Natural killer cell (primary cell): ENCODE measurements at regions of chr15 and their contacts with region 1.

Region 1: DNA sequence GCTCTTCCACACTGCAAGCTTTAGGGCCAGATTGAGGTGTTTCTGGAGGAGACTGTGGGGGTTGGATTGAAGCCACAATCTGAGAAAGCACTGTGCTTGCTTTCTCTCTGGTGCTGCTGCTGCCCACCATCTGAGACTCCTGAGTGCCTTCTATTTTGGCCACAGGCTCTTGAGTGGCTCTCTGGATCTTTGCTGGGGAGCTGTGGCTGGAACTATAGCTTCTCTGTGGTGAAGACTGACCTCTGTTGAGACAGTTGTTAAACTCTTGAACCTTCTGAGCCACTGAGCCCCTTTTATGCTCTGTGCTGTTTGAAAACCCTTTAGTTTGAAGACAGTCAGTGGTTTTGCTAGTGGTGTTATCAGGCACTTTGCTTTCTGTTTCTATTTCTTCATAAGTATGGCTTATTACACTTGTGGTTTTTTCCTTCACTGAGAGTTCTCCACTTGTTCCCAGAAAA is 108.7 kb upstream of the TSPAN3 start:
- DNase-seq: peak; percentile 26 to 50
- ATAC-seq: peak; percentile 59 to 74 (median 73)
- H3K4me3 ChIP-seq: no peak overlapping the region
- H3K4me3 Mint-ChIP-seq: peak overlapping the region; percentile 79
- H3K27ac ChIP-seq: peak overlapping the region; percentile 75
- H3K27ac Mint-ChIP-seq: peak overlapping the region; percentile 86 to 89
- H3K4me1 ChIP-seq: peaks cover 41% of the 10 kb centered on the region
- H3K4me1 Mint-ChIP-seq: peaks cover 48 to 51% of the 10 kb centered on the region in 2 donors
- H3K27me3 ChIP-seq: no peaks in the 10 kb centered on the region
- H3K27me3 Mint-ChIP-seq: no peaks in the 10 kb centered on the region
- CTCF ChIP-seq: no peak

Region 2: DNA sequence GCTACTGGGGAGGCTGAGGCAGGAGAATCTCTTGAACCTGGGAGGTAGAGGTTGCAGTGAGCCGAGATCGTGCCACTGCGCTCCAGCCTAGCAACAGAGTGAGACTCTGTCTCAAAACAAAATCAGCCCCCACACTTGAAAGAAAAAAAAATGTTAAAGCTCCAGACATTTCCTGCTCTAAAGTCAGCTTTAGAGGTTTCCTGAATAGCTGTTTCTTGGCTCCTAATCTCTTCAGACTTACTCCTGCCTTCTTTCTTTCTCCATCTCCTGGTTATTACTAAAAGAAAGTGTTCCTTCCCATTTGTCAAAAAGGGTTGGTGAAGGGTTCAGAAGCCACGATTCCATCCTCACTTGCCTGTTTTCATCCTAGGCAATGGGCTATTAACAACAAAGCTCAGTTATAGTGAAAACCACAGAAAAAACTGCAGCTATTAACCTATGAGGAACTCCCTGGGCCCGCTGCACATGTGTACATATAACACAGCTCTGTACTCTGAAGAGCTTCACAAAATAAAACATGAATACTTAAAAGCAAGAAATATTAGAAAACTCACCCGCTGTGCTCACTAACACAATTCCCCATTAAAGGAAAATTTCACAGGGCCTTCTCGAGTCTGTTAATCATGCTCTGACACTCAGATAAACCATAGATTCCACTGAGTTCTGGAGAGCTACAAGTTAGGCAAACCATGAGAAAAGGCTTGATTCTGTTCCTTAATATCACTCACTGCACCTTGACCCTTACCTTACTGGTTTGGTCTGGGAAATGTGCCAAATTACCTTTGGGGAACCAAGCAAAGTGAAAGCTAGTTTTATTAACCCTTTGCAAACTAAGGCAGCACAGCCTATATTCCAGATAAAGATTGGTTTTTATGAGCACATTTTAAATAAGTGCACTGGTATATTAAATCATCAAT is 18.8 kb before region 1 on chr15:
- intact Hi-C with region 1: loop called (anchors 2 kb)
- DNase-seq: peak in 1 of 2 donors; percentile 45
- ATAC-seq: peak; percentile 66 to 71 (median 69)
- H3K4me3 ChIP-seq: no peak overlapping the region
- H3K4me3 Mint-ChIP-seq: peak overlapping the region; percentile 80
- H3K27ac ChIP-seq: peak overlapping the region; percentile 84
- H3K27ac Mint-ChIP-seq: peak overlapping the region; percentile 92 to 93
- H3K4me1 ChIP-seq: peaks cover 35% of the 10 kb centered on the region
- H3K4me1 Mint-ChIP-seq: peaks cover 52 to 58% of the 10 kb centered on the region in 2 donors
- H3K27me3 ChIP-seq: no peaks in the 10 kb centered on the region
- H3K27me3 Mint-ChIP-seq: no peaks in the 10 kb centered on the region
- CTCF ChIP-seq: no peak

Region 3: DNA sequence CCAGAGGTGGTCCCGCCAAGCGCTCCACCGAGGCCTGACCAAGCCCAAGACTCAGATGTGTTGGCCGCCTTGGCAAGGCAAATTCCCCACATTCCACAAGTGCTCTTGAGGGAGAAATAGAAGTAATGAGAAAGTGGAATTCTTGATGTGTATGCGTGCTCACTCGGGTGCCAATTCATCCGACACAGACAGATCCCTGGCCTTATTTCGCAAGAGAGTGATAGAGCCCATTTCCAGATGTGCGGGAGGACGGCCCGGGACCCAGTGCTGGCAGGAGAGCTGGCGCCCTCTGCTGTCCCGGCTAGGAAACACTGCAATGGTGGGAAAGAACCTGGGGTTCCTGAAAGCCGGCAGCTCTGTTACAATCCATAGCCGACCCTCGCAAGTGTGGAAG is 317.1 kb after region 1 on chr15:
- intact Hi-C with region 1: loop called (anchors 2 kb)
- DNase-seq: peak; percentile 72 to 81
- ATAC-seq: peak; percentile 80 to 94 (median 92)
- H3K4me3 ChIP-seq: no peak overlapping the region
- H3K4me3 Mint-ChIP-seq: no peak overlapping the region
- H3K27ac ChIP-seq: no peak overlapping the region
- H3K27ac Mint-ChIP-seq: no peak overlapping the region
- H3K4me1 ChIP-seq: peaks cover 17% of the 10 kb centered on the region
- H3K4me1 Mint-ChIP-seq: peaks cover 10 to 17% of the 10 kb centered on the region in 2 donors
- H3K27me3 ChIP-seq: no peaks in the 10 kb centered on the region
- H3K27me3 Mint-ChIP-seq: no peaks in the 10 kb centered on the region
- CTCF ChIP-seq: peak; percentile 96